ENCODE measurements at regions of chr9 and their contacts with region 1.

Region 1: GRCh38 chr9:112074250-112075008 is 100.7 kb downstream of the SUSD1 start:
- DNase-seq: peak; percentile 74 to 77 (median 75)
- H3K4me3 ChIP-seq: no peak overlapping the region
- H3K4me3 Mint-ChIP-seq: peak overlapping the region; percentile 51 to 82 (median 74)
- H3K27ac ChIP-seq: no peak overlapping the region
- H3K27ac Mint-ChIP-seq: peak overlapping the region; percentile 20 to 82 (median 46)
- H3K4me1 ChIP-seq: peaks cover 26% of the 10 kb centered on the region
- H3K4me1 Mint-ChIP-seq: peaks cover 23 to 41% (median 29%) of the 10 kb centered on the region in 4 donors
- H3K27me3 ChIP-seq: no peaks in the 10 kb centered on the region
- H3K27me3 Mint-ChIP-seq: no peaks in the 10 kb centered on the region

Region 2: GRCh38 chr9:111597817-111598729 is 476.4 kb before region 1 on chr9:
- CTCF ChIA-PET with region 1: interaction called, 8 read pairs
- POLR2A ChIA-PET with region 1: interaction called, 7 read pairs
- intact Hi-C with region 1: loop called (anchors 1 kb)
- DNase-seq: peak; percentile 61 to 72 (median 65)
- H3K4me3 ChIP-seq: peak overlapping the region; percentile 47 to 59
- H3K4me3 Mint-ChIP-seq: peak overlapping the region; percentile 88 to 96 (median 92)
- H3K27ac ChIP-seq: no peak overlapping the region
- H3K27ac Mint-ChIP-seq: peak overlapping the region in 6 of 7 donors; percentile 41 to 81 (median 66)
- H3K4me1 ChIP-seq: peaks cover 21% of the 10 kb centered on the region
- H3K4me1 Mint-ChIP-seq: peaks cover 9 to 29% (median 17%) of the 10 kb centered on the region in 4 donors
- H3K27me3 ChIP-seq: peaks cover 8% of the 10 kb centered on the region
- H3K27me3 Mint-ChIP-seq: peaks cover 19 to 22% of the 10 kb centered on the region in 2 donors

Region 3: DNA sequence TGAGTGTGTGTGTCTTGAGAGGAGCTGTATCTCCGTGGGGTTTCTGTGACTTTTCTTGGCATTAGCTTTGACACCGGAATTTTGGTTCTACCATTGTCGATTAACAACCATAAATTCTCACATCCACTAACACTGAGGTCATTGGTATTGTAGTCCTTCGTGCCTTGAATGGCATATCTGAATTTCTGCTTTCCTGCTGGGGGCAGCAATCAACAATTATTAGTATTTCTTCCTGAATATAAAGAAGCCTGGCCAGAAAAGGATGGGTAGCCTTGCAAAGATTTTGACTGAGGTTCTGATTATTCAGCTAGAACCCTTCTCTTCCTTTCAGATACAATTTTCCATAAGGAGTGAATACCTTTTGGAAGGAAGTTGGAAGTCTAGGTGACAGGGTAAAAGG is 246.2 kb before region 1 on chr9:
- CTCF ChIA-PET with region 1: interaction called, 100 read pairs
- POLR2A ChIA-PET with region 1: interaction called, 3 read pairs
- intact Hi-C with region 1: no loop called
- DNase-seq: peak in 4 of 5 donors; percentile 14 to 31 (median 24)
- H3K4me3 ChIP-seq: no peak overlapping the region
- H3K4me3 Mint-ChIP-seq: no peak overlapping the region
- H3K27ac ChIP-seq: no peak overlapping the region
- H3K27ac Mint-ChIP-seq: peak overlapping the region in 1 of 7 donors; percentile 32
- H3K4me1 ChIP-seq: no peaks in the 10 kb centered on the region
- H3K4me1 Mint-ChIP-seq: peaks cover 0 to 1% (median 0%) of the 10 kb centered on the region in 4 donors
- H3K27me3 ChIP-seq: no peaks in the 10 kb centered on the region
- H3K27me3 Mint-ChIP-seq: no peaks in the 10 kb centered on the region

Region 4: DNA sequence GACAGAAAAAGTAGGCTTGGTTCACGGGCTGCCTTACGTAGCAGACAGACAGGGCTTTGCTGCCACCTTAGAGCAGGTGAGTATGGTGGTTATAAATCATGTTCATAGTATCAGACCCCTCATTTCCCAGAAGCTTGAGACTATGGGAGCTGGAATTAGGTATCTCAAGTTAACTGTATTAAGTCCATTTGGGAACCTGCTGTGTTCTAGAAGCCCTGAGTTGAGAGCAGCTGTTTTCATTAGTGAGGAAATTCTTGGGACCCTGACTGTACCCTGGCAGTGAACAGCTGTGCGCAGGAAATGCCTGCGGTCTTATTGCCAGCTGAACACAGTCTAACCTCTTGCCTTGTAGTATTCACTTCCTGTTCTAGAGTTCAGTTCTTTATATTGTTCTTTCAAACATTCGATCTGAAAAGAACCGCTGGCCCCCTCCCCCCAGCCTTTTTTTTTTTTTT is 148.0 kb before region 1 on chr9:
- CTCF ChIA-PET with region 1: interaction called, 19 read pairs
- POLR2A ChIA-PET with region 1: interaction called, 8 read pairs
- intact Hi-C with region 1: loop called (anchors 1 kb)
- DNase-seq: peak; percentile 71 to 79 (median 78)
- H3K4me3 ChIP-seq: no peak overlapping the region
- H3K4me3 Mint-ChIP-seq: peak overlapping the region; percentile 45 to 85 (median 79)
- H3K27ac ChIP-seq: peak overlapping the region; percentile 24
- H3K27ac Mint-ChIP-seq: peak overlapping the region; percentile 63 to 95 (median 86)
- H3K4me1 ChIP-seq: peaks cover 50% of the 10 kb centered on the region
- H3K4me1 Mint-ChIP-seq: peaks cover 26 to 50% (median 36%) of the 10 kb centered on the region in 4 donors
- H3K27me3 ChIP-seq: no peaks in the 10 kb centered on the region
- H3K27me3 Mint-ChIP-seq: no peaks in the 10 kb centered on the region

Region 5: GRCh38 chr9:111985315-111985714 is 89.1 kb before region 1 on chr9:
- CTCF ChIA-PET with region 1: interaction called, 10 read pairs
- POLR2A ChIA-PET with region 1: no interaction called
- intact Hi-C with region 1: no loop called
- DNase-seq: no peak
- H3K4me3 ChIP-seq: no peak overlapping the region
- H3K4me3 Mint-ChIP-seq: peak overlapping the region in 1 of 8 donors; percentile 43
- H3K27ac ChIP-seq: no peak overlapping the region
- H3K27ac Mint-ChIP-seq: peak overlapping the region in 1 of 7 donors; percentile 13
- H3K4me1 ChIP-seq: peaks cover 28% of the 10 kb centered on the region
- H3K4me1 Mint-ChIP-seq: peaks cover 21 to 40% (median 29%) of the 10 kb centered on the region in 4 donors
- H3K27me3 ChIP-seq: no peaks in the 10 kb centered on the region
- H3K27me3 Mint-ChIP-seq: no peaks in the 10 kb centered on the region

Region 6: GRCh38 chr9:112097712-112098688 is 23.6 kb after region 1 on chr9:
- CTCF ChIA-PET with region 1: interaction called, 10 read pairs
- POLR2A ChIA-PET with region 1: no interaction called
- intact Hi-C with region 1: no loop called
- DNase-seq: peak; percentile 64 to 73 (median 71)
- H3K4me3 ChIP-seq: no peak overlapping the region
- H3K4me3 Mint-ChIP-seq: no peak overlapping the region
- H3K27ac ChIP-seq: no peak overlapping the region
- H3K27ac Mint-ChIP-seq: no peak overlapping the region
- H3K4me1 ChIP-seq: peaks cover 21% of the 10 kb centered on the region
- H3K4me1 Mint-ChIP-seq: peaks cover 17 to 33% (median 23%) of the 10 kb centered on the region in 4 donors
- H3K27me3 ChIP-seq: no peaks in the 10 kb centered on the region
- H3K27me3 Mint-ChIP-seq: no peaks in the 10 kb centered on the region

Region 7: DNA sequence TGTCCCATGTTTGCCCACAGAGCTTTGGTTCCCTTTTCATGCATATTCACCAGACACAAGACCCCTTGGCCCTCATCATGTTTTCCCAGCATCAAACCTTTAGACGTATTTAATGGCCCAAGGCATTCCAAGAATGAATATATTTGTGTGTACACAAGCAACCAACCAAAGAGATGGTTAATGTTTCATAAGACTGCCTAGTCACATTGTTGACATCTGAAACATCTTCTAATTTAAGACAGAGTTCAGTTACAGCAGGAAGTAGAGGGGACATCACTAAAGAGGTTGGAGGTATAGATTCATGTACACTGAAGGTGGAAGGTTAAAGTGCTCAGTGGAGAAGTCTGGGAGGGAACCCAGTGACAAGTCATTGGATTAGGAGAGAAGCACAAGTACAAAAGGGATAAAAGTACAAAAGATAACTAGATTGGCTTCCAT is 51.5 kb after region 1 on chr9:
- CTCF ChIA-PET with region 1: no interaction called
- POLR2A ChIA-PET with region 1: no interaction called
- intact Hi-C with region 1: no loop called
- DNase-seq: no peak
- H3K4me3 ChIP-seq: no peak overlapping the region
- H3K4me3 Mint-ChIP-seq: no peak overlapping the region
- H3K27ac ChIP-seq: no peak overlapping the region
- H3K27ac Mint-ChIP-seq: no peak overlapping the region
- H3K4me1 ChIP-seq: no peaks in the 10 kb centered on the region
- H3K4me1 Mint-ChIP-seq: peaks cover 0 to 1% (median 0%) of the 10 kb centered on the region in 4 donors
- H3K27me3 ChIP-seq: no peaks in the 10 kb centered on the region
- H3K27me3 Mint-ChIP-seq: no peaks in the 10 kb centered on the region